ENCODE measurements at regions of chr7 and their contacts with region 1.

Region 1: GRCh38 chr7:129644634-129645230 is 33.2 kb downstream of the NRF1 start:
- DNase-seq: no peak
- H3K4me3 ChIP-seq: no peak overlapping the region
- CTCF ChIP-seq: no peak
- POLR2A ChIP-seq: no peak

Region 2: GRCh38 chr7:129356176-129356575 is 288.6 kb before region 1 on chr7:
- intact Hi-C with region 1: loop called (anchors 5 kb)
- DNase-seq: no peak
- H3K4me3 ChIP-seq: no peak overlapping the region
- CTCF ChIP-seq: no peak
- POLR2A ChIP-seq: no peak

Measured in lower leg skin (tissue), 4 donors.